ENCODE measurements at regions of chr10 and their contacts with region 1.

Region 1: GRCh38 chr10:96616961-96617360 is 30.1 kb upstream of the TM9SF3 start:
- DNase-seq: no peak
- ATAC-seq: no peak
- H3K4me3 Mint-ChIP-seq: no peak overlapping the region
- H3K27ac Mint-ChIP-seq: no peak overlapping the region
- H3K4me1 Mint-ChIP-seq: no peaks in the 10 kb centered on the region
- H3K27me3 Mint-ChIP-seq: no peaks in the 10 kb centered on the region
- CTCF ChIP-seq: no peak

Region 2: GRCh38 chr10:96416643-96417042 is 200.3 kb before region 1 on chr10:
- CTCF ChIA-PET with region 1: no interaction called
- POLR2A ChIA-PET with region 1: interaction called, 13 read pairs
- intact Hi-C with region 1: no loop called
- DNase-seq: no peak
- ATAC-seq: no peak
- H3K4me3 Mint-ChIP-seq: no peak overlapping the region
- H3K27ac Mint-ChIP-seq: no peak overlapping the region
- H3K4me1 Mint-ChIP-seq: no peaks in the 10 kb centered on the region
- H3K27me3 Mint-ChIP-seq: peaks cover 9% of the 10 kb centered on the region
- CTCF ChIP-seq: no peak

Region 3: GRCh38 chr10:96632974-96633710 is 16.2 kb after region 1 on chr10:
- CTCF ChIA-PET with region 1: no interaction called
- POLR2A ChIA-PET with region 1: no interaction called
- intact Hi-C with region 1: no loop called
- DNase-seq: no peak
- ATAC-seq: no peak
- H3K4me3 Mint-ChIP-seq: no peak overlapping the region
- H3K27ac Mint-ChIP-seq: no peak overlapping the region
- H3K4me1 Mint-ChIP-seq: peaks cover 6% of the 10 kb centered on the region
- H3K27me3 Mint-ChIP-seq: no peaks in the 10 kb centered on the region
- CTCF ChIP-seq: no peak

Region 4: DNA sequence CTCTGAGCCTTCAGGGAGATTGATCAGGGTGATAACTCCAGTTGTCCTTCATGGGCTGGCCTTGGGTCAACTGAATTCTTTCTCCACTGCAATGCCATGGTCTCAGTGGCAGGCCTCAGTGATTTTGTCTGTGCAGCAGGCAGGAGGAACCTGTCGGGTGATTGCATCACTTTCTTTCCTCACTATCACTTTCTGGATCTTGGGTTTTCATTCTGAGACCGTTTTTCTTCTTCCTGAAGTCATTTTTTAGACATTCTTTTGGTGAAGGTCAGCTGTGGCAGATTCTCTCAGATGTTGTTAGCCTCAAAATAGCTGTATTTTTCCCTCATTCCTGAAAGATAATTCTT is 186.3 kb after region 1 on chr10:
- CTCF ChIA-PET with region 1: no interaction called
- POLR2A ChIA-PET with region 1: no interaction called
- intact Hi-C with region 1: no loop called
- DNase-seq: no peak
- ATAC-seq: no peak
- H3K4me3 Mint-ChIP-seq: no peak overlapping the region
- H3K27ac Mint-ChIP-seq: no peak overlapping the region
- H3K4me1 Mint-ChIP-seq: no peaks in the 10 kb centered on the region
- H3K27me3 Mint-ChIP-seq: no peaks in the 10 kb centered on the region
- CTCF ChIP-seq: no peak